Mammary epithelial cell (primary cell): ENCODE measurements at regions of chr4 and their contacts with region 1.

Region 1: GRCh38 chr4:152696764-152697261 is 17.0 kb upstream of the TMEM154 start:
- DNase-seq: peak; percentile 99
- H3K4me3 ChIP-seq: peak overlapping the region in 2 of 3 experiments; percentile 13 to 14
- H3K27ac ChIP-seq: peak overlapping the region; percentile 100
- H3K4me1 ChIP-seq: peaks cover 31% of the 10 kb centered on the region
- H3K27me3 ChIP-seq: no peaks in the 10 kb centered on the region
- CTCF ChIP-seq: no peak

Region 2: DNA sequence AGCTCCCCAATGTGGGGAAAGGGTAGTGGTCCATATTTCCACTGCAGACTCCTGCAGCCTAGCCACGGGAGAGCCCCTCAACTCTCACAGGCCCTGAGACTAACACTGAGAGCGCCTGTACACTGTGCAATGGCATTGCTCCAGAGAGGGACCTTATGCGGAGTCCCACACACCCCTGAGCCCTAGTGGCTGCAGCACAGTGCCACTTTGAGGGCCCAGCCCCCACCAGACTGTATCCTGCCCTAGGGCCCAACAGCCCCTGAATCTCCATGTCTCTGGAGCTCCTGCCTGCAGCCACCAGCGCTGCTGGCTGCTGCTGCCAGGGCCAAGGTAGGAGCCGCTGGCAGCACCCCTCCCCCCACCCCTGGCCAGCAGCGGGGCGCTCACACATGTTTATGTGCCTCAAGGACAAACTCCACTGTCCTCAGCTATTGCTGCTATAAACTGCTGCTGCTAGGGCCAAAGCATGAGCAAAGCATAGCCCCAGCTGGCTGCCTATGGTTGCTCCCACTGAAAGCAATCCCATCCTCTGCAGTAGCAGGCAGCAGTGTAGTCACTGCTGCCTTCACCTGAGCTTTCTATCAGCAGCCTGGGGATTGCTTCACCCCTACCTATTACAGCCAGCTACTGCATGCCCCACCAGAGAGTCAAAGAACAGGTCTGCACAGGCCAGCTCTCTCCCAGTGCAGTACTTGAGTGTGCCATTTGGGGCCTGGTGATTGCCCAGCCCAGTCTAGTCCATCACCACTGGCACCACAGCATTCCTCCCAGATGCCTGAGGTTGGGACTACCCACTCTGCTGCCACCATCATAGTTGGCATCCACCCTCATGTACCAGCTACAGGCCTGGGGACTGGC is 41.3 kb before region 1 on chr4:
- CTCF ChIA-PET with region 1: no interaction called
- dilution Hi-C with region 1: no loop called
- in situ Hi-C with region 1: no loop called
- intact Hi-C with region 1: loop called (anchors 2 kb)
- DNase-seq: peak; percentile 91
- H3K4me3 ChIP-seq: no peak overlapping the region
- H3K27ac ChIP-seq: peak overlapping the region; percentile 12
- H3K4me1 ChIP-seq: peaks cover 15% of the 10 kb centered on the region
- H3K27me3 ChIP-seq: no peaks in the 10 kb centered on the region
- CTCF ChIP-seq: peak; percentile 36 to 46

Region 3: GRCh38 chr4:152983774-152984411 is 287.1 kb after region 1 on chr4:
- CTCF ChIA-PET with region 1: no interaction called
- dilution Hi-C with region 1: no loop called
- in situ Hi-C with region 1: no loop called
- intact Hi-C with region 1: no loop called
- DNase-seq: peak; percentile 86
- H3K4me3 ChIP-seq: no peak overlapping the region
- H3K27ac ChIP-seq: peak overlapping the region; percentile 74
- H3K4me1 ChIP-seq: peaks cover 54% of the 10 kb centered on the region
- H3K27me3 ChIP-seq: no peaks in the 10 kb centered on the region
- CTCF ChIP-seq: no peak